PC-3 (cell line): ENCODE measurements at regions of chr21 and their contacts with region 1.

Region 1: DNA sequence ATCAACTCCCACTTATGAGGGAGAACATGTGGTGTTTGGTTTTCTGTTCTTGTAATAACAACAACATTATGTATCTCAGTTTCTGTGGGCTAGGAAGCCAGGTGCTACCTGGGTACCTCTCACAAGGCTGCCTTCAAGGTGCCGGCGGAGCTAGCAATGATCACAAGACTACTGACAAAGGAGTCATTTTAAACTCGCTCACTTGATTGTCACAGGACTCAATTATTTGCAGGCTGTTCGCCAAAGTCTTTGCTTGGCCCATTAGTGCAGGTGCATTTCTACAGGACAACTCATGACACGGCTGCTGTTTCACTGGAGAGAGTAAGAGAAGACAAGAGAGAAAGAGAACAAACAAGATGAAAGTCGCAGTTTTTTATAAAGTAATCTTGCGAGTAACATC is 1237.4 kb upstream of the TMPRSS15 start:
- DNase-seq: no peak
- ATAC-seq: no peak
- H3K4me3 ChIP-seq: no peak overlapping the region
- H3K27ac ChIP-seq: no peak overlapping the region
- H3K4me1 ChIP-seq: no peaks in the 10 kb centered on the region
- H3K27me3 ChIP-seq: no peaks in the 10 kb centered on the region
- CTCF ChIP-seq: no peak

Region 2: GRCh38 chr21:19490481-19490880 is 150.5 kb before region 1 on chr21:
- CTCF ChIA-PET with region 1: no interaction called
- POLR2A ChIA-PET with region 1: no interaction called
- intact Hi-C with region 1: no loop called
- DNase-seq: no peak
- ATAC-seq: no peak
- H3K4me3 ChIP-seq: no peak overlapping the region
- H3K27ac ChIP-seq: no peak overlapping the region
- H3K4me1 ChIP-seq: no peaks in the 10 kb centered on the region
- H3K27me3 ChIP-seq: no peaks in the 10 kb centered on the region
- CTCF ChIP-seq: no peak

Region 3: GRCh38 chr21:19621837-19622496 is 19.0 kb before region 1 on chr21:
- CTCF ChIA-PET with region 1: no interaction called
- POLR2A ChIA-PET with region 1: interaction called, 10 read pairs
- intact Hi-C with region 1: no loop called
- DNase-seq: no peak
- ATAC-seq: no peak
- H3K4me3 ChIP-seq: no peak overlapping the region
- H3K27ac ChIP-seq: no peak overlapping the region
- H3K4me1 ChIP-seq: no peaks in the 10 kb centered on the region
- H3K27me3 ChIP-seq: no peaks in the 10 kb centered on the region
- CTCF ChIP-seq: no peak